ENCODE measurements at regions of chr2 and their contacts with region 1.

Region 1: GRCh38 chr2:202375609-202376408 is at the start of gene BMPR2:
- DNase-seq: peak; percentile 94
- H3K4me3 ChIP-seq: peak within 1 kb of the TSS; percentile 79 to 84 (median 82)
- H3K27ac ChIP-seq: peak within 1 kb of the TSS; percentile 93 to 98 (median 96)
- H3K4me1 ChIP-seq: peaks cover 13 to 34% (median 27%) of the 10 kb centered on the region in 4 donors
- H3K27me3 ChIP-seq: no peaks in the 10 kb centered on the region
- CTCF ChIP-seq: no peak
- EP300 ChIP-seq: peak; percentile 48
- POLR2A ChIP-seq: peak; percentile 37
- total RNA-seq, gene BMPR2: 54.8 to 76.7 (median 67.7) TPM

Region 2: DNA sequence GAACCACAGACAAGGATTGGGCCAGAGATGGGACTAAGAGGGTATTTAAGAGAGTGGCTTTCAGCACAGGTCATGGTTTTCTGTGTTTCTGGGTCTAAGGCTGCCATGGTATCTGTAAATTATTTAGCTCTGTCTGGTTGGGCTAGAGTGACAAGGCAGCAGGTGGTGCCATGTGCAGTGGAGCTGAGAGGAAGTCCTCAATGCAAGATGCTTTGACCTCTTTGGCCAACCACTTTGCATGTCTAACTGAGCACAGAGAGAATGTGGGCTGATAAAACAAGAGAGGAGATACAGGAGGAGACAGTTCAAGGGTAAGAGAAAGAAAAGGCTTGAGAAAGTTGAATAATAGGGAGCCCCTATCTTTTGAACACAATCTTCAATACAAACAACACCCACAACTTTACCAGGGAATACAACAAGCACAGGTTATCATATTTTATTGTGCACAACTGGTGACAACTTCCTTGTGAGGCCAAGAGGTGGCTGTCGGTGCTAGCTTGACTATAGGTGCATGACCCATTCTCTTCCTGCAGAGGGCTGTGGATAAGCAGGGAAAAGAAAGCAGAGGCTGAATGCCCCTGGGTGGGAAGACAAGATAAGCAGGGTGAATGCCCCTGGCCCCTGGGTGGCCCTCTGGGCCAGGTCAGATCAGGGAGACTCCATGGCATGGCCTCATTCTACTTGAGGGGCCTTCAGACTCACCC is 1031.0 kb before region 1 on chr2:
- intact Hi-C with region 1: no loop called
- DNase-seq: no peak
- H3K4me3 ChIP-seq: no peak overlapping the region
- H3K27ac ChIP-seq: no peak overlapping the region
- H3K4me1 ChIP-seq: peaks cover 0 to 4% (median 0%) of the 10 kb centered on the region in 4 donors
- H3K27me3 ChIP-seq: no peaks in the 10 kb centered on the region
- CTCF ChIP-seq: no peak
- EP300 ChIP-seq: no peak
- POLR2A ChIP-seq: no peak

Region 3: GRCh38 chr2:202265467-202266277 is 110.1 kb before region 1 on chr2 and contains the start of gene NOP58:
- intact Hi-C with region 1: loop called (anchors 2 kb)
- DNase-seq: peak; percentile 98
- H3K4me3 ChIP-seq: peak within 1 kb of the TSS; percentile 68 to 92 (median 84)
- H3K27ac ChIP-seq: peak within 1 kb of the TSS; percentile 91 to 97 (median 94)
- H3K4me1 ChIP-seq: peaks cover 15 to 52% (median 32%) of the 10 kb centered on the region in 4 donors
- H3K27me3 ChIP-seq: no peaks in the 10 kb centered on the region
- CTCF ChIP-seq: no peak
- EP300 ChIP-seq: peak; percentile 48
- POLR2A ChIP-seq: peak; percentile 86
- total RNA-seq, gene NOP58: 15.6 to 46.6 (median 31.6) TPM

Region 4: GRCh38 chr2:202436626-202437025 is 60.8 kb after region 1 on chr2:
- intact Hi-C with region 1: loop called (anchors 5 kb)
- DNase-seq: no peak
- H3K4me3 ChIP-seq: no peak overlapping the region
- H3K27ac ChIP-seq: peak overlapping the region; percentile 5 to 56 (median 52)
- H3K4me1 ChIP-seq: peaks cover 31 to 48% (median 41%) of the 10 kb centered on the region in 4 donors
- H3K27me3 ChIP-seq: no peaks in the 10 kb centered on the region
- CTCF ChIP-seq: no peak
- EP300 ChIP-seq: no peak
- POLR2A ChIP-seq: no peak

Region 5: DNA sequence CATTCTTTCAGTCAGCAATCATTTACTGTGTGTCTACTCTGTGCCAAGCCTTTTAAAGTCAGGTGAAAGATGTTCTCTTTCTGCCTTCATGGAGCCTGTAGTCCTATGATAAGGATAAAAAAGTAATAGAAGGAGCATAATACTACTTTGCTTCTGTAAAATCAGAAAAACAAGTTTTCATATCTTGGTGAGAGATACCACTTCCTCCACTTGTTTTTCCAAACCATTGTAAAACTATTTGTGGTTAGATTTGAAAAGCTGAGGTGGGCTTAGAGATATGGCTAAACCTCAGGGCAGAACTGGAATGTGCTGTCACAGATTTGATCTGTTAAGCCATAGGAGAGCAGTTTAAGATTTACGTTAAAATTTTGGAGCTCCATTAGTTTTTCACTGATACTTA is 154.2 kb after region 1 on chr2:
- intact Hi-C with region 1: loop called (anchors 10 kb)
- DNase-seq: no peak
- H3K4me3 ChIP-seq: no peak overlapping the region
- H3K27ac ChIP-seq: no peak overlapping the region
- H3K4me1 ChIP-seq: no peaks in the 10 kb centered on the region
- H3K27me3 ChIP-seq: no peaks in the 10 kb centered on the region
- CTCF ChIP-seq: no peak
- EP300 ChIP-seq: no peak
- POLR2A ChIP-seq: no peak

Region 6: DNA sequence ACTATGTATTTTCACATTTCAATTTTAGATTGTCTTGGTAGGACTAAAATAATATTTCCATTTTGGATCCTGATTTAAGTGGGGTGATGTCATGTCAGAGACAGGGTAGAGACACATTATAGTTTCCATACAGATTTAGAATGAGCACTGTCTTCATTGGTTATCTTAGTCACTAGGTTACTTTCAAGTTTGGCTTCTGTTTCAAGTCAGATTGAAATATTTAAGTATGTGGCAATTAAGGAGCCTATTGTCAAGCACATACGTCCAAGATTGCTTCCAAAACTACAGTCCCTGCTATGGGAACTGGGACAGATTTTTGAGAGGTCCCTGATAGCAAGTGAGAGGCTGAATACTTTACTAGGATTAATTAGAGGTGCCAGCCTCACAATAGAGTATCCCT is 169.7 kb after region 1 on chr2:
- intact Hi-C with region 1: no loop called
- DNase-seq: no peak
- H3K4me3 ChIP-seq: no peak overlapping the region
- H3K27ac ChIP-seq: no peak overlapping the region
- H3K4me1 ChIP-seq: peaks cover 0 to 9% (median 6%) of the 10 kb centered on the region in 4 donors
- H3K27me3 ChIP-seq: no peaks in the 10 kb centered on the region
- CTCF ChIP-seq: no peak
- EP300 ChIP-seq: no peak
- POLR2A ChIP-seq: no peak

Region 7: DNA sequence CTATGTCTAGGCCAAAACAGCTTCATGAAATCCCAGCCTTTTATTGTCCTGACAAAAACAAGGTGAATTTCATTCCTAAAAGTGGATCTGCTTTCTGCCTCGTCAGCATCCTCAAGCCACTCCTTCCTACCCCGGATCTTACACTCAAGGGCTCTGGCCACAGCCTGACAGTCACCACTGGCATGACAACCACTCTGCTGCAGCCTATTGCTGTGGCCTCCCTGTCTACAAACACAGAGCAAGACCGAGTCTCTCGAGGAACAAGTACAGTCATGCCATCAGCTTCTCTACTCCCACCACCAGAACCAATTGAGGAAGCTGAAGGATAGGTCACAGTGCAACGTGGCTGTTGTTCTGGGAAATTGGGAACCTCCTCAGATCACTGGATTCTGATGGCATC is 389.6 kb after region 1 on chr2:
- intact Hi-C with region 1: no loop called
- DNase-seq: no peak
- H3K4me3 ChIP-seq: no peak overlapping the region
- H3K27ac ChIP-seq: no peak overlapping the region
- H3K4me1 ChIP-seq: no peaks in the 10 kb centered on the region
- H3K27me3 ChIP-seq: no peaks in the 10 kb centered on the region
- CTCF ChIP-seq: no peak
- EP300 ChIP-seq: no peak
- POLR2A ChIP-seq: no peak

Measured in esophagus muscularis mucosa (tissue), 4 donors.